Activated T-helper 2 cell treated with anti-CD3 and anti-CD28 coated beads, Interferon-gamma antibody, Interleukin-2, Interleukin-4, amounts not matched to agents 10 μg/mL and 5 μg/mL and 100 μg/mL, durations not matched to agents 14 hours and 24 hours and 36 hours (primary cell): ENCODE measurements at regions of chr5 and their contacts with region 1.

Region 1: GRCh38 chr5:128201065-128201926 is 117.7 kb downstream of the SLC12A2 start:
- DNase-seq: peak; percentile 71
- H3K4me3 Mint-ChIP-seq: peak overlapping the region; percentile 10
- H3K27ac Mint-ChIP-seq: no peak overlapping the region
- H3K4me1 Mint-ChIP-seq: peaks cover 24% of the 10 kb centered on the region
- H3K27me3 Mint-ChIP-seq: peaks cover 4% of the 10 kb centered on the region

Region 2: DNA sequence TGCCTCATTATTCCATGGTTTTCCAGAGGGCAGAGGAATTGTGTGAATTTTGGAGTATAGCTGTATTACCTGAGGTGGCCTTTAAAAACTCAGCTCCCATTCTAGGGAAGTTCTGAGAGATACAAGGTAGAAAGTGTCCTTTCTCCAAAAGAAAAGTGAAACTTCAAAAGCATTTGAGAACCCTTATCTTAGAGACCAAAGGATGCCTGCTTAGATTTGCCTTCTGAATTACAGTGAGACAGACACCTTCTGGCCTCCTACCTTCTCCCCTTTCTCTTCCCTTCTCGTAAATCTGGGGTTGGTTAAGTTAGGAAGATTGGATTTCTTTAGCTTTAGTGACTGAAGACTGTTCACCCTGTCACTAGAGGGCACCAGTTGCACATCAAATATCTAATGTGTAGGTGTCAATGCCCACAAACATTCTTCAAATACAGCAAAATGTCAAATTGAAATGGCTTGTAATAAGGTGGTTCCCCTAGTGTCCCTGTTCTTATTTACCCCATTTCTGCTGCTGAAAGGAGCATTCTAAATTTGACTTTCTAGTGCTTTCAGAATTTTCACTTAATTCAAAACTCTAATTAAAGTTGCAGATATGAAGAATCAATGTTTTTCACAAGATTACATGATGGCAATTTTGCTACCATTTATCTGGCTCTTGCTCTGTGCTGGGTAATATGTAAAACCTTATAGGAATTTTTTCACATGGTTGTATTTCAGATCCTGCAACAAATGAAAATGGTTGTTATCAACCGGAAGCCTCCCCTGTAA is 637.1 kb before region 1 on chr5:
- intact Hi-C with region 1: loop called (anchors 1 kb)
- DNase-seq: no peak
- H3K4me3 Mint-ChIP-seq: no peak overlapping the region
- H3K27ac Mint-ChIP-seq: no peak overlapping the region
- H3K4me1 Mint-ChIP-seq: peaks cover 7% of the 10 kb centered on the region
- H3K27me3 Mint-ChIP-seq: peaks cover 18% of the 10 kb centered on the region

Region 3: GRCh38 chr5:127746756-127747155 is 454.5 kb before region 1 on chr5:
- intact Hi-C with region 1: loop called (anchors 2 kb)
- DNase-seq: no peak
- H3K4me3 Mint-ChIP-seq: no peak overlapping the region
- H3K27ac Mint-ChIP-seq: no peak overlapping the region
- H3K4me1 Mint-ChIP-seq: no peaks in the 10 kb centered on the region
- H3K27me3 Mint-ChIP-seq: peaks cover 3% of the 10 kb centered on the region

Region 4: DNA sequence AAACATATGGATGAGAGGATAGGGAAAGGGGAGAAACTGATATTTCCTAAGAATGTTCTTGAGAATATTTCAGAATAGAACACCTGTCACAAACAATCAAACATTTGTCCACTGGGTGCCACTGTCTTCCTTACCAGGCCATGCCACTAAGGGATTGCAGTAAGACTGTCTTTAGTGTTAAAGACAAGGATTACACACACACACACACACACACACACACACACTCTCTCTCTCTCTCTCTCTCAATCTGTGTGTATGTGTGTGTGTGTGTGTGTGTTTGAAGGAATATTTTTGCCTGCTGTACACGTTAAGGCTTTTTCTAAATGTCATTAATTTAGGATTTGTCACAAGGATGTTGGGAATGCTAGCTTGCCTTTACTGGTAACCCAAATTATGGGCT is 443.7 kb before region 1 on chr5:
- intact Hi-C with region 1: loop called (anchors 1 kb)
- DNase-seq: no peak
- H3K4me3 Mint-ChIP-seq: no peak overlapping the region
- H3K27ac Mint-ChIP-seq: no peak overlapping the region
- H3K4me1 Mint-ChIP-seq: no peaks in the 10 kb centered on the region
- H3K27me3 Mint-ChIP-seq: peaks cover 12% of the 10 kb centered on the region

Region 5: DNA sequence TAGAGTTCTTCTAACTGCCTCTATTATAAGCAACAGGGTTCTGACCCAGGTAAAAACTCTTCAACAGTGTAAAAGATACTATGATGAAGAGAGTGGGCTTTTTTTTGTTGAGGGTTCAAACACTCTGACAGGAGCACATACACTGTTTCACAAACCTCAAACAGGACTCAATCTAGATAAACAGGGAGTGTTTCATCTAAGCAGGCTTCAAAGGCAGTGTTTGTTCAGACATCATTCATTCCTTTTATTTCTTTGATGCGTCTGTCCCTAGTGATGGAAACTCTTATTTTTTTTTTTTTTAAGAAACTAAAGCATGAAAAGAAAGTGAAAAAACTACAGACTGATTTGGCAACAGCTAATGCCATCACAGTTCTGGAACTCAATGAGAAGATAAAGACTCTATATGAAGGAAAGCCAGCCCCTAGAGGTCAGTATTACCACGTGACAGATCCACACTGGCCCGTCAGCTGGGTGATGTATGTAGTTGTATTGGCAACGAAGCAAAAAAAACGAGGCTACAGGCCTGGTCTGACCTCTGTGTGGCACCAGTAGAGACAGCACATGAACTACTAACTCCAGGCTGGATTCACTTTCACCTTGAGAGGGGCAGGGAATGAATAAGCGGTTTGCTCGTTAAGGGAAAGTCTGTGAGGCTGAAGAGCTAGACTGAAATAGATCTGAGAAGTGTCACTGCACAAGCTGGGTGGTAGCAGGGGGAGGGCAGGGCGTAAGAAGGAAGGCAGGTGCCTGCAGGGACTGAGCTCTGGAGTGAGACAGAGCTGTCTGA is 325.9 kb before region 1 on chr5:
- intact Hi-C with region 1: loop called (anchors 5 kb)
- DNase-seq: no peak
- H3K4me3 Mint-ChIP-seq: no peak overlapping the region
- H3K27ac Mint-ChIP-seq: no peak overlapping the region
- H3K4me1 Mint-ChIP-seq: no peaks in the 10 kb centered on the region
- H3K27me3 Mint-ChIP-seq: peaks cover 8% of the 10 kb centered on the region

Region 6: GRCh38 chr5:128213340-128213739 is 12.0 kb after region 1 on chr5:
- intact Hi-C with region 1: no loop called
- DNase-seq: no peak
- H3K4me3 Mint-ChIP-seq: no peak overlapping the region
- H3K27ac Mint-ChIP-seq: no peak overlapping the region
- H3K4me1 Mint-ChIP-seq: no peaks in the 10 kb centered on the region
- H3K27me3 Mint-ChIP-seq: peaks cover 2% of the 10 kb centered on the region